ENCODE measurements at regions of chr3 and their contacts with region 1.

Region 1: DNA sequence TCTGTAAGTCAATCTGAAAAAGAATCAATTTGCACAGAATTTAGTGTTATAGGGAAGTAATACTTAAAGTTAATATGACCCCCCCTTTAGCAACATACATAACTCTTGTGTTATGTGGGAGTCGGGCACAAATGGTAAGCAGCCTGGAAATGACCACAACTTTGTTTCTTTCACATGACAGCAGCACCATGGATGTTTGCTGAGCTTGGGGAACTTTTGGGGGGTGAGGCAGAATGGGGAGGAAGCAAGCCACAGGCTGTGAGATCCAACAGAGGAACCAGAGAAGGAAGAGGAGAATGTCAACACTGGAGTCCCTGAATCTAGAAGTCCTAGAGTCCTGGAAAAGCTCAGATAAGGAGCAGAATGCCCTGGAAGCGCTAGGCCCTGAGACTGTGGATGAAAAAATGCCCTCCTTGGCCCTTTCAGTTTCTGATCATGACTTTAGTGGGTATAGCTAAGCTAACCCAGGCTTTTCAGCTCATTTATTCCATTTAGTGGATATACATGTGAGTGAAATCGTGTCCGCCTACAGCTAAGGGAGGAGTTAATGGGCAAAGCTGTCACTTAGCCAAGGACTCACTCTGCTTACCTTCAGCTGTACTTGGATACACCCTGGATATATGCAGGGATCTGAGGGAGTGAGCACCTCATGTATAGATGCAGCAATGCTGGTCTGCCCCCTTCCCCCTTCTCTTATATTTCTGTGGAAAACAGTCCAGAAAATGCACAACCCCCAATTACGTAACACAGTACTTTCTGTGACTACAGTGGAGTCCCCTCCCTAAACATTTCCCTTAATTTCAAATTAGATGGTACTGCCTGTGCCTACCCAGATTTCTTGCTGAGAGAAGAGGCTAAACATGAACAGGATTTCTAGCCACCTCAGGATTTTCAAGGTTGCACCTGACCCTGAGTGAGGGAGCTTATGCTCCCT is 39.1 kb downstream of the CFAP91 start:
- DNase-seq: no peak
- ATAC-seq: no peak
- H3K4me3 Mint-ChIP-seq: no peak overlapping the region
- H3K27ac Mint-ChIP-seq: no peak overlapping the region
- H3K4me1 Mint-ChIP-seq: no peaks in the 10 kb centered on the region
- H3K27me3 Mint-ChIP-seq: no peaks in the 10 kb centered on the region
- CTCF ChIP-seq: no peak

Region 2: DNA sequence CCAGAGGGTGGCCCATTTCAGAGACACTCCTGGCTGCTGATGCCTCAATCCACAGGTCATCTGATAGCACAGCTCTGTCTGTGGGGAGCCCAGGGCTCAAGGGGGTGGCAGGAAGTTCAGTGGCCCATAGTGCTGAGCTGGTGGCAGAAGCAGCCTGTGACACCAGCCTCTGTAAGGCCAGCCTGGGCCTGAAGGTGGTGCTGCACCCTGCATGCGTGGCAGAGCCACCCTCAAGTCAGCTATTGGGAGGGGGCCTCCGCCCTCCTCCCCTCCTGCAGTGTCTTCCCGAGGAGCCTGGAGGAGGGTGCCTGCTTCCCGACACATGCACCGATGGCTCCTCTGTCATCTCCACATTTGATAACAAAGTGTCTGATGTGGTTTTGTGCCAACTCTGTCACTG is 141.2 kb before region 1 on chr3:
- CTCF ChIA-PET with region 1: interaction called, 12 read pairs
- POLR2A ChIA-PET with region 1: no interaction called
- DNase-seq: peak; percentile 71
- ATAC-seq: peak; percentile 99
- H3K4me3 Mint-ChIP-seq: no peak overlapping the region
- H3K27ac Mint-ChIP-seq: no peak overlapping the region
- H3K4me1 Mint-ChIP-seq: peaks cover 12% of the 10 kb centered on the region
- H3K27me3 Mint-ChIP-seq: no peaks in the 10 kb centered on the region; the same call in none of the 2 replicates
- CTCF ChIP-seq: peak; percentile 43; the same call in 1 of the 2 replicates

Region 3: GRCh38 chr3:119731560-119732343 is 10.2 kb before region 1 on chr3:
- CTCF ChIA-PET with region 1: interaction called, 10 read pairs
- POLR2A ChIA-PET with region 1: no interaction called
- DNase-seq: no peak
- ATAC-seq: no peak
- H3K4me3 Mint-ChIP-seq: no peak overlapping the region
- H3K27ac Mint-ChIP-seq: no peak overlapping the region
- H3K4me1 Mint-ChIP-seq: 0 out of 2 replicates have a peak, but pooled peaks cover 4% of the 10 kb centered on the region
- H3K27me3 Mint-ChIP-seq: no peaks in the 10 kb centered on the region
- CTCF ChIP-seq: no peak